ENCODE measurements at regions of chr1 and their contacts with region 1.

Region 1: GRCh38 chr1:231040019-231040799 is at the start of gene FAM89A:
- DNase-seq: peak; percentile 84
- ATAC-seq: peak; percentile 82
- H3K4me3 ChIP-seq: peak within 1 kb of the TSS; percentile 6 to 85 (median 68)
- H3K4me3 Mint-ChIP-seq: peak within 1 kb of the TSS; percentile 86
- H3K27ac ChIP-seq: no peak within 1 kb of the TSS
- H3K27ac Mint-ChIP-seq: peak within 1 kb of the TSS; percentile 47
- H3K4me1 ChIP-seq: peaks cover 13% of the 10 kb centered on the region in 2 donors
- H3K4me1 Mint-ChIP-seq: peaks cover 16% of the 10 kb centered on the region
- H3K27me3 ChIP-seq: peaks cover 0 to 11% (median 3%) of the 10 kb centered on the region in 4 experiments
- H3K27me3 Mint-ChIP-seq: peaks cover 6% of the 10 kb centered on the region
- CTCF ChIP-seq: no peak
- total RNA-seq, gene FAM89A: 5.6 and 6.1 TPM in 2 replicates

Region 2: GRCh38 chr1:230867903-230868735 is 172.1 kb before region 1 on chr1 and contains the start of gene C1orf198:
- CTCF ChIA-PET with region 1: no interaction called
- POLR2A ChIA-PET with region 1: no interaction called
- intact Hi-C with region 1: loop called (anchors 5 kb)
- DNase-seq: peak; percentile 85
- ATAC-seq: peak; percentile 96
- H3K4me3 ChIP-seq: peak within 1 kb of the TSS; percentile 25 to 87 (median 76)
- H3K4me3 Mint-ChIP-seq: peak within 1 kb of the TSS; percentile 90
- H3K27ac ChIP-seq: peak within 1 kb of the TSS in 1 of 2 donors; percentile 50
- H3K27ac Mint-ChIP-seq: peak within 1 kb of the TSS; percentile 72
- H3K4me1 ChIP-seq: peaks cover 13 to 16% of the 10 kb centered on the region in 2 donors
- H3K4me1 Mint-ChIP-seq: peaks cover 17% of the 10 kb centered on the region
- H3K27me3 ChIP-seq: peaks cover 0 to 24% (median 17%) of the 10 kb centered on the region in 4 experiments
- H3K27me3 Mint-ChIP-seq: peaks cover 37% of the 10 kb centered on the region
- CTCF ChIP-seq: no peak
- total RNA-seq, gene C1orf198: 6.6 TPM in 2 replicates

Measured in B cell (primary cell).